ENCODE measurements at regions of chr10 and their contacts with region 1.

Region 1: DNA sequence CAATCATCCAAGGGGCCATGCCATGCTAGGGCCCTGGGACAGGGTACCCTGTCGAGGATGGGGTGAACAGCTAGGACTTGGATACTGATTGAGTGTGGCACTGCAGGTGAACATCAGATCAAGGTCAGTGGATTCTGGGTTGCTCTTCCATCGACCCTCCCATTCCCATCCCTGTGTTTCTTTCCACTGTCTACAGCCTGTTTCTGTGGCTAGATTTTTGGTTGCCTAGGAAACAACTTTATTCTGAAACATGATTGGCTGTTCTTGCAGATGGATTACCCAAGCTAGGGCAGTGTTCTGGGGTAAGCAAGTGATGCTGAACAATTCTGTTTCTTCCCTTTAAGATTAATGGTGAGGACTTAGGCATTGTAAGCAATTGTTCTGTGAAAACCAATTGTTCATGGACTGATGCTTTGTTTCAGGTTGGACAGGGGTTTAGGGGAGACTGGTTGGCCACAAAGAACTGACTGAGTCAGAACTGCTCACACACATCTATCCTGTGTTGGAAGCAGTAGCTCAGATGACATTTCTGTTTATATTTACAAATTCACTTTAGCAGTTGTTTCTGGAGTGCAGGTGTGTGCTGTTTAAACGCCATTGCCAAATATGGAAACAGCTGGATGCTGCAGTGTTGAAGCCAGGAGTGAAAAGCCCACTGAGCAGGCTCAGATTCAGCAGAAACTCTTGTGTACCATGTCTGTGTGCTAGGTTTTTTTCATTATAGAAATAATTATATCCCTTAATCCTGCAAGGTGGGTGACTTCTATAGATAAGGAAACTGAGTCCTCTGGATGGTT is 102.3 kb upstream of the BTBD16 start:
- DNase-seq: no peak
- CTCF ChIP-seq: no peak

Region 2: DNA sequence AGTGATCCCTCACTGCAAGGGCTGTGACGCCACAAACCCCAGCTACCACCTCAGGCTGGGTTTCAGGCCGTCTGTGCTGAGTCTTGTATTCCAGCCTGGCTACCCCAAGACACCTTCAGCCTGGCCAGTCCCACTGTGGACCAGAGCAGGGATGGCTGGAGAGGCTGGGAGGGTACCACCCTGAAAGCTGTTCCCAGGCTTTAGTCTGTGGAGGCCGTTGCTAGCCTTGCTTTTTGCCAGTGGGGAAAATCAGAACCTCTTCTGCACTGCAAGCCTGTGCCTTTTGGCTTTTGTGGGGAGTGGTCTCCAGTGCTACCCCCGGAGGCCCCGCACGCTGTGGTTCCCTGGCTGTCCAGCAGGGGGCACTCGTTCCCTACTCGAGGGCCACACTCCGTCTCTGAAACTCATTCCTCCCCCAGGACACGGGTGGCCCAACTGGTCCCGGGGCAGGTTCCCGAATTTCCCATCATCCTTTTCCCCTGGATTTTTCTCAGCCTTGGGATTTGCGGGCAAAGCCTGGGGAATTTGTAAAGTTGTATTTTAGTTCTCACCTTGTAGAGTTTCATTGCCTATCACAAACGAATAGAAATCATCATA is 26.1 kb before region 1 on chr10:
- CTCF ChIA-PET with region 1: interaction called, 12 read pairs
- POLR2A ChIA-PET with region 1: interaction called, 5 read pairs
- DNase-seq: peak; percentile 67
- CTCF ChIP-seq: peak; percentile 62